ENCODE measurements at regions of chr15 and their contacts with region 1.

Region 1: DNA sequence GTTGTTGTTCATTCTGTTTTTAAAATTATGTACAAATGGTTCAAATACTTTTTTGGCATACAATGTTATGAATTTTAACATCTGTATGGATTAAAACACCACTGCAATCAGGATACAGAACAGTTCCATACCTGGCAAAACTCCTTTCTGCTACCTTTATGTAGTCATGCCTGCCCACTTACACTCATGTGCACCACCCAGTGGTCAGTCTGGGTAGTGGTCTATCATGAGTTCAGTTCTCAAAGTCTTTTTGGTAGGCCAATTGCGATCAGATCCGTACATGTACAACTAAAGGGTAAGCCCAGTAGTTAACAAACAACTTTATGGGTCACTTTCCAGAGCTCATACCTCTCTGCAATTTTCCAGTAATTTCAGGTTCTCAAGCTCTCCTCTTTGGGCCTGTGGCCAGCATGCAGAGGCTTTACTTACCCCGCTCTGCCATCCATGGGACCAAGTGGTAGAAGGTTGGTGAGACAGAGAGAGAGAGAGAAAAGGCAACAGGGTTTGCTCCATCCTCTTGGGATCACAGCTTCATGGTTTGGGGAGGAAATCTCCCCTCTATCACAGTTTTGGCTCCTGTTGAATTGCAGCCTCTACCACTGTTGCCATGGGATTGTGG is 63.9 kb upstream of the FAM98B start:
- DNase-seq: peak; percentile 55 to 71
- ATAC-seq: peak; percentile 66 to 89 (median 70)
- H3K4me3 ChIP-seq: no peak overlapping the region
- H3K4me3 Mint-ChIP-seq: no peak overlapping the region
- H3K27ac ChIP-seq: no peak overlapping the region
- H3K27ac Mint-ChIP-seq: no peak overlapping the region
- H3K4me1 ChIP-seq: no peaks in the 10 kb centered on the region
- H3K4me1 Mint-ChIP-seq: no peaks in the 10 kb centered on the region
- H3K27me3 ChIP-seq: no peaks in the 10 kb centered on the region
- H3K27me3 Mint-ChIP-seq: peaks cover 9 to 30% of the 10 kb centered on the region in 2 donors
- CTCF ChIP-seq: peak; percentile 88

Region 2: GRCh38 chr15:37995461-37996347 is 394.3 kb before region 1 on chr15:
- intact Hi-C with region 1: loop called (anchors 2 kb)
- DNase-seq: peak in 1 of 2 donors; percentile 32
- ATAC-seq: peak in 1 of 3 donors; percentile 32
- H3K4me3 ChIP-seq: no peak overlapping the region
- H3K4me3 Mint-ChIP-seq: no peak overlapping the region
- H3K27ac ChIP-seq: no peak overlapping the region
- H3K27ac Mint-ChIP-seq: no peak overlapping the region
- H3K4me1 ChIP-seq: no peaks in the 10 kb centered on the region
- H3K4me1 Mint-ChIP-seq: no peaks in the 10 kb centered on the region
- H3K27me3 ChIP-seq: no peaks in the 10 kb centered on the region
- H3K27me3 Mint-ChIP-seq: peaks cover 21 to 31% of the 10 kb centered on the region in 2 donors
- CTCF ChIP-seq: peak; percentile 42

Region 3: GRCh38 chr15:38002883-38003477 is 387.1 kb before region 1 on chr15:
- intact Hi-C with region 1: loop called (anchors 1 kb)
- DNase-seq: peak in 1 of 2 donors; percentile 28
- ATAC-seq: peak in 1 of 3 donors; percentile 58
- H3K4me3 ChIP-seq: no peak overlapping the region
- H3K4me3 Mint-ChIP-seq: no peak overlapping the region
- H3K27ac ChIP-seq: no peak overlapping the region
- H3K27ac Mint-ChIP-seq: no peak overlapping the region
- H3K4me1 ChIP-seq: no peaks in the 10 kb centered on the region
- H3K4me1 Mint-ChIP-seq: no peaks in the 10 kb centered on the region
- H3K27me3 ChIP-seq: no peaks in the 10 kb centered on the region
- H3K27me3 Mint-ChIP-seq: peaks cover 10 to 19% of the 10 kb centered on the region in 2 donors
- CTCF ChIP-seq: peak; percentile 30

Region 4: DNA sequence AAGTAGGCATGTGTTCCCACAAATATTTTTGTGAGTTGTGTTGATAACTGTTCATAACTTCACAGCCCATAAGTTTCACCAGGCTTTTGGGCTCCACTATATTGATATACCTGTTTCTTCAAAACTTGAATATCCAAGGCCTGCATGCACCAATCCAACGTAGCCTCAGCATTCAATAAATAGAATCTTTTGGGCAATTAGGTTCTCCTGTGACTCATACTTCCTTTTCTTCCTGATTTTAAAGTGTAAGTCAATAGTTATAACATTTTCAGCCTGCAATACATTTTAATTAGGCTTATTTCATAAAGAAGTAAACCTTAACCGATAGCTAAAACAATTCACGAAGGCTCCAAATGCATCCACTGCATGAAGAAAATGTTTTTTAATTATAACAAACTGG is 235.2 kb before region 1 on chr15:
- intact Hi-C with region 1: no loop called
- DNase-seq: no peak
- ATAC-seq: no peak
- H3K4me3 ChIP-seq: no peak overlapping the region
- H3K4me3 Mint-ChIP-seq: no peak overlapping the region
- H3K27ac ChIP-seq: no peak overlapping the region
- H3K27ac Mint-ChIP-seq: no peak overlapping the region
- H3K4me1 ChIP-seq: no peaks in the 10 kb centered on the region
- H3K4me1 Mint-ChIP-seq: peaks cover 0 to 1% of the 10 kb centered on the region in 2 donors
- H3K27me3 ChIP-seq: peaks cover 3% of the 10 kb centered on the region
- H3K27me3 Mint-ChIP-seq: peaks cover 2 to 11% of the 10 kb centered on the region in 2 donors
- CTCF ChIP-seq: no peak

Region 5: DNA sequence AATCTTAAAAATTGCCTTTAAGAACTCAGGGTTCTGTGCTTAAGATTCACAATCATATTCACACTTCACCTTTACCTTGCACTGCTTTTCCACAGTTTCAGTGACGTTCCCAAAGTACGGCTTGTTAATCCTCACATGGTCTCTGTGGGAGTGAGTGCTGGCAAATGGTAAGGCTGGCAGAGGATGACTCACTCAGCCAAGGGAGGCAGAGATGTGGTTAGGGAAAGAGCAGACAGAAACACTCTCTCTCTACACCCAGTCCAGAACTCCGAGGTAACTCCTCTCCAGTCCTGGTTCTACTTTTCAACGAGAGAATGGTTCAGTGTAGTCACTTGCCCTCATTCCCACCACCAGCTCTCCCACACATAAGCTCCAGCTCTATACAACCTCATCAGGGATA is 141.5 kb after region 1 on chr15:
- intact Hi-C with region 1: no loop called
- DNase-seq: no peak
- ATAC-seq: no peak
- H3K4me3 ChIP-seq: no peak overlapping the region
- H3K4me3 Mint-ChIP-seq: no peak overlapping the region
- H3K27ac ChIP-seq: no peak overlapping the region
- H3K27ac Mint-ChIP-seq: peak overlapping the region; percentile 17 to 82
- H3K4me1 ChIP-seq: peaks cover 29% of the 10 kb centered on the region
- H3K4me1 Mint-ChIP-seq: peaks cover 90 to 94% of the 10 kb centered on the region in 2 donors
- H3K27me3 ChIP-seq: no peaks in the 10 kb centered on the region
- H3K27me3 Mint-ChIP-seq: no peaks in the 10 kb centered on the region
- CTCF ChIP-seq: no peak